Sigmoid colon (tissue), 7 donors: ENCODE measurements at regions of chr14 and their contacts with region 1.

Region 1: GRCh38 chr14:88562831-88563686 is at the start of gene ZC3H14:
- DNase-seq: peak; percentile 90
- H3K4me3 ChIP-seq: peak within 1 kb of the TSS; percentile 81 to 94 (median 85)
- H3K27ac ChIP-seq: peak within 1 kb of the TSS; percentile 86 to 97 (median 95)
- H3K4me1 ChIP-seq: peaks cover 0 to 32% (median 22%) of the 10 kb centered on the region in 4 donors
- H3K27me3 ChIP-seq: no peaks in the 10 kb centered on the region
- CTCF ChIP-seq: no peak
- EP300 ChIP-seq: no peak
- POLR2A ChIP-seq: peak; percentile 71 to 76
- total RNA-seq, gene ZC3H14: 80.4 to 89.5 (median 83.7) TPM

Region 2: GRCh38 chr14:88492272-88493089 is 70.6 kb before region 1 on chr14:
- intact Hi-C with region 1: loop called (anchors 2 kb)
- DNase-seq: peak; percentile 76
- H3K4me3 ChIP-seq: no peak overlapping the region
- H3K27ac ChIP-seq: no peak overlapping the region
- H3K4me1 ChIP-seq: peaks cover 0 to 7% (median 0%) of the 10 kb centered on the region in 4 donors
- H3K27me3 ChIP-seq: no peaks in the 10 kb centered on the region
- CTCF ChIP-seq: peak; percentile 64 to 91 (median 86)
- EP300 ChIP-seq: no peak
- POLR2A ChIP-seq: no peak

Region 3: DNA sequence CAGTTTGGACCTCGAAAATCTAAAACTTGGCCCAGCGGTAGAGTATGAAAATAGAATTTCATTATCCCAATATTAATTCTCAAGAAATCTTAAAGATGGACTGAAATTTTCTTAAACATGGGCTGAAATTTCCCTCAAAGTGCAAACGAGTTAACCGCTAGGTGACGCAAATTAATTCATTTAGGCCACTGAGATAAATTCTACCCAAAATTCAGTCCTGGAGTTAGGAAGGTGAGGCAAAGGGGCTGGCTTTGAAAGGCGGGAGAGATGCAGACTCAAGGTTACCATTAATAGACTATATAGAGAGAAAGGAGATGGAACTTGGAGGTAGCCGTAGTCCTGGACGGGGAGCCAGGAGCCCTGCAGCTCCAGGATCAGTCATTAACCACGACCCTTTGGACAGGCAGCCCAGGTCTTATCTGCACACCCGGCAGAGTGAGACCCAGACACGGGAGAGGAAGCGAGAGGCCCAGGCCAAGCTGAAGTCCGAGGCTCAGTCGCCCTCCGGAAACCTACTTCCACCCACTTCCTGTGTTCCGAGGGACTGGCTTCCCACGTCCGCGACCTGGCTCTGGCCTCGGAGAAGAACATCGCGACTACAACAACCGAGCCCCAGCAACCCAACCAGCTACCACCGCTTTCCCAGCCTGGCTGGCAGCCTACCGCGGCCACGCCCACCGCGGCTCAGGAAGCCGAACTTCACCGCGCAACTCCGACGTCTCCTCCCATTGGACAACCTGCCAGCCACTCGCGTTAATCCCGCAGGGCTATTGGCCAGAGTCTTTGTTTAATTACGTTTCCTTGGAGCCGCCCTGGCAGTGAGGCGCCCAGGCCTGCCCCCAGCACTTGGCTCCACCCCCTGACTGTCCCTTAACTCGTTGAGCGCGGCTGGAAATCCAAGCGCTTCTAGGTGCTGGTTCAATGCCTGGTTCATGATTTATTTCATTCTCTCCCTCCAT is 1391.3 kb after region 1 on chr14 and contains the start of gene EFCAB11:
- intact Hi-C with region 1: loop called (anchors 10 kb)
- DNase-seq: peak; percentile 99
- H3K4me3 ChIP-seq: peak within 1 kb of the TSS; percentile 67 to 94 (median 76)
- H3K27ac ChIP-seq: peak within 1 kb of the TSS; percentile 87 to 98 (median 92)
- H3K4me1 ChIP-seq: peaks cover 0 to 27% (median 20%) of the 10 kb centered on the region in 4 donors
- H3K27me3 ChIP-seq: no peaks in the 10 kb centered on the region
- CTCF ChIP-seq: no peak
- EP300 ChIP-seq: no peak
- POLR2A ChIP-seq: no peak
- total RNA-seq, gene EFCAB11: 7.8 to 8.9 (median 8.8) TPM